B cell (primary cell): ENCODE measurements at regions of chr11 and their contacts with region 1.

Region 1: DNA sequence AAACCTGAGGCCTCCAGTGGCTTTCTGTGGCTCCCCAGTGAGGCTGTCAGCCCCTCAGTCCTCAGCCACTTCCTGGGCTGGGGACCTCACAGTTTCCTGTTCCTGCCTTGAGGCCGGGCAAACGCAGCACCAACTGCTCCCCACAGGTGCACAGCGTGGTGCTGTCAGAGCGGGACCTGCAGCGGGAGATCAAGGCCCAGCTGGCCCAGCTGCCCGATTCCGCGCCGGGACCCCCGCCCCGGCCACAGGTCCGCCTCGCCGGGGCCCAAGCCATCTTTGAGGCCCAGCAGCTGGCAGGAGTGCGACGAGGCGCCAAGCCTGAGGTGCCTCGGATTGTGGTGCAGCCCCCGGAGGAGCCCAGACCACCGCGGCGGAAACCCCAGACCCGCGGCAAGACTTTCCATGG is 5.4 kb downstream of the TBC1D10C start:
- DNase-seq: peak; percentile 82
- ATAC-seq: peak; percentile 55
- H3K4me3 ChIP-seq: peak overlapping the region in 4 of 5 experiments; percentile 40 to 80 (median 56)
- H3K4me3 Mint-ChIP-seq: peak overlapping the region; percentile 91
- H3K27ac ChIP-seq: peak overlapping the region; percentile 83 to 88
- H3K27ac Mint-ChIP-seq: peak overlapping the region; percentile 100
- H3K4me1 ChIP-seq: peaks cover 92 to 99% of the 10 kb centered on the region in 2 donors
- H3K4me1 Mint-ChIP-seq: peaks cover 91% of the 10 kb centered on the region
- H3K27me3 ChIP-seq: no peaks in the 10 kb centered on the region
- H3K27me3 Mint-ChIP-seq: no peaks in the 10 kb centered on the region
- CTCF ChIP-seq: no peak

Region 2: GRCh38 chr11:67373925-67374618 is 35.2 kb before region 1 on chr11:
- CTCF ChIA-PET with region 1: interaction called, 3 read pairs
- POLR2A ChIA-PET with region 1: interaction called, 11 read pairs
- intact Hi-C with region 1: no loop called
- DNase-seq: peak; percentile 77
- ATAC-seq: peak; percentile 35
- H3K4me3 ChIP-seq: peak overlapping the region in 4 of 5 experiments; percentile 48 to 95 (median 76)
- H3K4me3 Mint-ChIP-seq: peak overlapping the region; percentile 94
- H3K27ac ChIP-seq: peak overlapping the region; percentile 41 to 89
- H3K27ac Mint-ChIP-seq: peak overlapping the region; percentile 92
- H3K4me1 ChIP-seq: peaks cover 40 to 47% of the 10 kb centered on the region in 2 donors
- H3K4me1 Mint-ChIP-seq: peaks cover 50% of the 10 kb centered on the region
- H3K27me3 ChIP-seq: no peaks in the 10 kb centered on the region
- H3K27me3 Mint-ChIP-seq: no peaks in the 10 kb centered on the region
- CTCF ChIP-seq: peak; percentile 66

Region 3: DNA sequence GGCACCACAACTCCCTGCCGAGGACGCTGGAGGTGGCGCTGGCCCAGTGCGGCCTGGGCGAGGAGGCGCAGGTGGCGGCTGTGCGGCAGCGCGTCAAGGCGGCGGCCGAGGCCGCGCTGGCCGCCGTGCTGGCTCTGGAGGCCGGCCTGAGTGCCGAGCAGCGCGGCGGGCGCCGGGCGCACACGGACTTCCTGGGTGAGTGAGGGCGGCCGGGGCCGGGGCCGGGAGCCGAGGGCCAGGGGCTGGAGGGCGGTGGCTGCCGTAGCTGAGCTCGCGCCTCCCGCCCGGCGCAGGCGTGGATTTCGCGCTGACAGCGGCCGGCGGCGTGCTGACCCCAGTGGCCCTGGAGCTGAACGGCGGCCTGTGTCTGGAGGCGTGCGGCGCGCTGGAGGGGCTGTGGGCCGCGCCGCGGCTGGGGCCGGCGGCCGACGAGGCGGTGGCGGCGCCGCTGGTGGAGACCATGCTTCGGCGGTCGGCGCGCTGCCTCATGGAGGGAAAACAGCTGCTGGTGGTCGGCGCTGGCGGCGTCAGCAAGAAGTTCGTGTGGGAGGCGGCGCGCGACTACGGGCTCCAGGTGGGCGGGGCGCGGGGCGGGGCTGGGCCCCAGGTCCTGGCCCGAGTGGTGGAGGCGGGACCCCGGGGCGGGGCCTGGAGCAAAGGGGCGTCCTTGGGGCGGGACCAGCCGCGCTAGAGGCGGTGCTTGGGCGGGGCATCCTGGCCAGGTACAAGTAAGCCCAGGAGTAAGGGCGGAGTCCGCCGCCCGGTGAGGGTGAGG is 11.6 kb after region 1 on chr11:
- CTCF ChIA-PET with region 1: interaction called, 121 read pairs
- POLR2A ChIA-PET with region 1: interaction called, 195 read pairs
- intact Hi-C with region 1: loop called (anchors 1 kb)
- DNase-seq: peak; percentile 98
- ATAC-seq: peak; percentile 85
- H3K4me3 ChIP-seq: peak overlapping the region in 4 of 5 experiments; percentile 32 to 63 (median 53)
- H3K4me3 Mint-ChIP-seq: peak overlapping the region; percentile 83
- H3K27ac ChIP-seq: peak overlapping the region; percentile 43 to 71
- H3K27ac Mint-ChIP-seq: peak overlapping the region; percentile 91
- H3K4me1 ChIP-seq: peaks cover 49 to 54% of the 10 kb centered on the region in 2 donors
- H3K4me1 Mint-ChIP-seq: peaks cover 50% of the 10 kb centered on the region
- H3K27me3 ChIP-seq: no peaks in the 10 kb centered on the region
- H3K27me3 Mint-ChIP-seq: no peaks in the 10 kb centered on the region
- CTCF ChIP-seq: no peak

Region 4: DNA sequence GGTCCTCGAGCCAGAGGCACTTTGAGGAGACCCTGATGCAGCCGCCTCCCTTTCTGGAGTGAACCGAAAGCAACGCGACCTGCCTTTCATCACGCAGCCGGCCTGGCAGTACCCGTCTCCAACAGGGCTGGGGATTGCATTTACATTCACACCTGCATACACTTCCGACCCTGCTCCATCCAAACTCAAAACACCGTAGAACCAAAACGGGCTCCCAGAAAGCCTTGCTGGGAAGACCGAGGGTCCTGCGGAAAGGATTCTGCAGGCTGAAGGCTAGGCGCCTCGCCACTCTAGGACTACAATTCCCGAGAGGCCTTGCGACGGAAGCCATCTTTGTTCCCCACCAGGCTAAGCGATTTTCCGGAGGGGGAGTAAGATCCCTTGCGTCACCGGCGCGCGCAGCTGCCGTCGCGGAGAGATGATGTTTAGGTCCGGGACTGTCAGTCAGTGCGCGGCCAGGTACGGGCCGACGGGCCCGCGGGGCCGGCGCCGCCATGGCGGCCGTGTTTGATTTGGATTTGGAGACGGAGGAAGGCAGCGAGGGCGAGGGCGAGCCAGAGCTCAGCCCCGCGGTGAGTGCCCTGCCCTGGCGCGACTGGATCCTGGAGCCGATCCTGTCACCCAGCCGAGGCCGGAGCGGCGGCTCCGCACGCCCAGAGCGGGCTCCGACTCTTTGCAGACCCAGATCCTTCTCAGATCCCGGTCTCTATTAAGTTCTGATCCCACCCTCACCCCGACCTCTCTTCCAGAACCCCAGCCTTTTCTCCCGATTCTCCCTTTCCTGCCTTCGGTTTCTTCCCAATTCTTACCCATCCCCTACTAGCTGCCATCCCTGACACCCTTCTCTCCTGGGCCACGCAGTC is 19.0 kb after region 1 on chr11 and contains the start of gene RPS6KB2:
- CTCF ChIA-PET with region 1: interaction called, 121 read pairs
- POLR2A ChIA-PET with region 1: interaction called, 195 read pairs
- intact Hi-C with region 1: no loop called
- DNase-seq: peak; percentile 98
- ATAC-seq: peak; percentile 86
- H3K4me3 ChIP-seq: peak within 1 kb of the TSS; percentile 82 to 95 (median 91)
- H3K4me3 Mint-ChIP-seq: peak within 1 kb of the TSS; percentile 99
- H3K27ac ChIP-seq: peak within 1 kb of the TSS; percentile 70 to 92
- H3K27ac Mint-ChIP-seq: peak within 1 kb of the TSS; percentile 96
- H3K4me1 ChIP-seq: peaks cover 13 to 46% of the 10 kb centered on the region in 2 donors
- H3K4me1 Mint-ChIP-seq: peaks cover 41% of the 10 kb centered on the region
- H3K27me3 ChIP-seq: no peaks in the 10 kb centered on the region
- H3K27me3 Mint-ChIP-seq: no peaks in the 10 kb centered on the region
- CTCF ChIP-seq: no peak
- total RNA-seq, gene RPS6KB2: 81.8 and 82.0 TPM in 2 replicates